ENCODE measurements at regions of chr19 and their contacts with region 1.

Region 1: GRCh38 chr19:11798391-11799330 is at the start of gene ZNF491:
- DNase-seq: peak; percentile 73 to 95
- H3K4me3 ChIP-seq: peak within 1 kb of the TSS; percentile 71 to 72
- H3K27ac ChIP-seq: peak within 1 kb of the TSS; percentile 60 to 80
- H3K4me1 ChIP-seq: peaks cover 6 to 8% of the 10 kb centered on the region in 2 donors
- H3K27me3 ChIP-seq: no peaks in the 10 kb centered on the region
- CTCF ChIP-seq: peak in 2 of 3 experiments; percentile 11 to 27
- total RNA-seq, gene ZNF491: not detected

Region 2: GRCh38 chr19:11766597-11767591 is 31.8 kb before region 1 on chr19 and contains the start of gene ZNF441:
- intact Hi-C with region 1: loop called (anchors 2 kb)
- DNase-seq: peak; percentile 89 to 98
- H3K4me3 ChIP-seq: peak within 1 kb of the TSS; percentile 93 to 94
- H3K27ac ChIP-seq: peak within 1 kb of the TSS; percentile 91 to 95
- H3K4me1 ChIP-seq: peaks cover 0 to 11% of the 10 kb centered on the region in 2 donors
- H3K27me3 ChIP-seq: no peaks in the 10 kb centered on the region
- CTCF ChIP-seq: no peak
- total RNA-seq, gene ZNF441: 0.85 TPM

Region 3: DNA sequence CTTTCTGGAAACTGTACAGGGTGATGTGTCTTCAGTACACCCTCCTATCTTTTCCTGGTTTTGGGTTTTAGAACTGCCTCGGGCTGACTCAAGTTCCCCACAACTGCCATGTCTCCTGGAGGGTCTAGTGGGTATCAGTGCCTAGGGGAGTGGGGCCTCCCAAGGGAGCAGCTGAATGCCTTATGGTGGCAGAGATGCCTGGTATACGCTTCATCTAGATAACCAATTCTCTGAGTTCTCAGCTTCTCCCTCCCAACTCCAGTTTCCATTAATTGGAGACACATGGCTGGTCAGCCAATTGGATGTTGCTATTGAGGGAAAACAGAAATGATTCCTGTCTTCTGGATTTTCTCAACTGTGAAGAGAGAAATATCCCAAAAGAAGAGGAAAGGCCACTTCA is 62.6 kb after region 1 on chr19:
- intact Hi-C with region 1: no loop called
- DNase-seq: no peak
- H3K4me3 ChIP-seq: no peak overlapping the region
- H3K27ac ChIP-seq: no peak overlapping the region
- H3K4me1 ChIP-seq: no peaks in the 10 kb centered on the region
- H3K27me3 ChIP-seq: no peaks in the 10 kb centered on the region
- CTCF ChIP-seq: no peak

Region 4: DNA sequence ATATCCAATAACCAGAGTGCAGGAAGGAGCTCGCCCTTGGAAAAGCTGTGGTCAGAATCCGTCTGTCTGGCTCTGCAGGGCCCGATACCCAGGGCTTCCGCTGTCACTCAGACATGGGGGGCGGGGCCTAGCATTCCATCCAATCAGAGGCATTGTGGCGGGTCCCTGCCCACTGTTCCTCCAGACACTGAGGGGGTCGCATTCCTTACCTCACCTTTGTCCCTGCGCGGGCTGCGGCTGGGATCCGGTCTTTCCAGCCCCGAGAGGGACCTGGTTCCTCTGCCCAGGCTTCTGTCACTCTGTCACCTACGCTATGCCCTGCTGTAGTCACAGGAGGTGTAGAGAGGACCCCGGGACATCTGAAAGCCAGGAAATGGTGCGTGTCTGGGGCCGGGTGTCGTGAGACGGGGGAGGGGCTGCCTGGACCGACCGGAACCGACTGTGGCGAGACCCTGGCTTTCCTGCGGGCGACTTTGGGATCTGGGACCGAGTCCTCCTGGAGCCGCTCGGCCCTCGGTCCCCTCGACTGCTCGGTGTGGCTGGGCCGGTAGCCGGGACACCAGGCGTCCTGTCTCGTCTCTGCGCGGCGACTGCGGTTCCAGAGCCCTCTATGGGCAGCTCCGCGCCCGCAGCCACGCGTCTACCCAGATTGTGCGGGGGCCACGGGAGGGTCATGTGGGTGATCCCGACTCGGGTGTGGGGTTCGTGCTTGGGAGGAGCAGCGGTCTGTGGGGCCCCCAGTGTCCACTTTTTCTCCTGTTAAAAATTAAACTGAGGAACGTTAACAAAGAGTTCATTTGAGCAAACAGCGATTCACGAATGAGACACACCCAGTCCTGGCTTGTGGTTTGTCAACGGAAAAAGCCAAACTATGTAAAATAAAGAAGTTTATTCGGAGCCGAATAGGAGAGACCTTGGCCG is 89.2 kb after region 1 on chr19 and contains the start of gene ZNF69:
- intact Hi-C with region 1: loop called (anchors 5 kb)
- DNase-seq: peak; percentile 59 to 92
- H3K4me3 ChIP-seq: peak within 1 kb of the TSS; percentile 72 to 80
- H3K27ac ChIP-seq: peak within 1 kb of the TSS; percentile 88 to 91
- H3K4me1 ChIP-seq: peaks cover 0 to 7% of the 10 kb centered on the region in 2 donors
- H3K27me3 ChIP-seq: no peaks in the 10 kb centered on the region
- CTCF ChIP-seq: peak in 1 of 3 experiments; percentile 40
- total RNA-seq, gene ZNF69: 0.85 TPM

Region 5: DNA sequence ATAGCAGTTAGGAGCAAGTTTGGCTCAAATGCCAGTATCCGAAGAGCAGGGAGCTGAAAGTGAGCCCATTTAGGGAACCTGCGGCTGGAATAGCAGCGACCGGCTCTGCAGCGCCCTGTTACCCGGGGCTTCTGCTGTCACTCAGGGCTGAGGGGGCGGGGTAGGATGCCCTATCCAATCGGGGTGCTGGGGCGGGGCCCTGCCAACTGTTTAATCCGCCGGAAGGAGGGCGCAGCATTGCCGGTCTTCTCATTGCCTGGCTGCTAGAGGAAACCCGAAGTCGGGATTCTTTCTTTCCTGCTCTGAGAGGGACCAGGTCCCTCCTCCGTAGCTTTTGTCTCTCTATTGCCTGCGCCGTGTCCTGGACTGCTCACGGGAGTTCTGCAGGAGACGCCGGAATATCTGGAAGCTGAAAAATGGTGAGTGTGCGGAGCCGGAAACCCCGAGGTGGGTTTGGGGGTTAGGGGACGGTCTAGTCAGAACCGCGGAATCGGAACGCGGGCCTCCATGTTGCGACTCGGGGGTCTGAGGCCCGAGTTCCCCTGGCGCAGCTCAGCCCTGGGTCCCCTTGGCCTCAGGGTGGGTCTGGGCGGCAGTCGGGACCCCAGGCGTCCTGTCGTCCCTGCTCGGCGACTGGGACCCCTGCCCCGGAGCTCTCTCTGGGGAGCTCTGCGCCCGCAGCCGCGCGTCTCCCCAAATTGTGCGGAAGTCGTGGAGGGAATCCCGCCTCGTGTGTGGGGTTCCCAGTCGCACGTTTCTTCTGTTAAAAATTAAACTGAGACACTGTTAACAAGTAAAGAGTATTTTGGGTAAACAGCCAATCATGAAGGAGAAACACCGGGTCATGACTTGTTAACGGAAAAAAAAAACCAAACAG is 189.0 kb after region 1 on chr19:
- intact Hi-C with region 1: loop called (anchors 1 kb)
- DNase-seq: peak; percentile 90 to 98
- H3K4me3 ChIP-seq: peak overlapping the region; percentile 80 to 92
- H3K27ac ChIP-seq: peak overlapping the region; percentile 83 to 88
- H3K4me1 ChIP-seq: no peaks in the 10 kb centered on the region
- H3K27me3 ChIP-seq: no peaks in the 10 kb centered on the region
- CTCF ChIP-seq: no peak

Region 6: DNA sequence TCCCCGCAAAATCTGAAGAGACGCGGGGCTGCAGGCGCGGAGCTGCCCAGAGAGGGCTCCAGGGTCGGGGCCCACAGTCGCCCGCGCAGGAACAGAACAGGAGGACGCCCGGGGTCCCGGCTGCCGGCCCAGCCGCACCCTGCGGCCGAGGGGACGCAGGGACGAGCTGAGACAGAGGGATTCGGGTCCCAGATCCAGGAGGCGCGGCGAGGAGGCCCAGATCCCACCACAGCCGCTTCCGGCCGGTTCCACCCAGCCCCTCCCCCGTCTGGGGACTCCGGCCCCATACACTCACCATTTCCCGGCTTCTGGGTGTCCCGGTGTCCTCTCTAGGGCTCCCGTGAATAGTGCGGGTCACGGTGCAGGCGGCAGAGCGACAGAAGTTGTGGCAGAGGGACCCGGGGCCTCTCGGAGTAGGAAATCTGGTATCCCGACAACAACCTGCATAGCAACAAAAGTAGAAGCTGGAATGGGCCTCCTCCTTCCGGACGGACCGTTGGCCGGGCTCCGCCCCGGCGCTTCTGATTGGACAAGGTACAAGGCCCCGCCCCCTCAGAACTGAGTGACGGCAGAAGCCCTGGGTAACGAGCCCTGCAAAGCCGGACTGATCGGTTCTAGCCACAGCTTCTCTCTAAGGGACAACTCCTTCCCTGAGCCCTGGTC is 341.4 kb after region 1 on chr19 and contains the start of gene ZNF20:
- intact Hi-C with region 1: loop called (anchors 1 kb)
- DNase-seq: peak; percentile 87 to 98
- H3K4me3 ChIP-seq: peak within 1 kb of the TSS; percentile 76 to 83
- H3K27ac ChIP-seq: peak within 1 kb of the TSS; percentile 78 to 82
- H3K4me1 ChIP-seq: peaks cover 0 to 17% of the 10 kb centered on the region in 2 donors
- H3K27me3 ChIP-seq: no peaks in the 10 kb centered on the region
- CTCF ChIP-seq: peak in 1 of 3 experiments; percentile 2
- total RNA-seq, gene ZNF20: 0.96 TPM